ENCODE measurements at regions of chr2 and their contacts with region 1.

Region 1: GRCh38 chr2:187299122-187299906 is 148.7 kb downstream of the CALCRL start:
- DNase-seq: peak in 1 of 5 donors; percentile 40
- ATAC-seq: no peak
- H3K4me3 ChIP-seq: no peak overlapping the region
- H3K27ac ChIP-seq: peak overlapping the region in 3 of 12 donors; percentile 5 to 36 (median 24)
- H3K4me1 ChIP-seq: peaks cover 0 to 24% (median 5%) of the 10 kb centered on the region in 12 donors
- H3K27me3 ChIP-seq: no peaks in the 10 kb centered on the region
- CTCF ChIP-seq: peak; percentile 11 to 60 (median 38)
- POLR2A ChIP-seq: no peak

Region 2: DNA sequence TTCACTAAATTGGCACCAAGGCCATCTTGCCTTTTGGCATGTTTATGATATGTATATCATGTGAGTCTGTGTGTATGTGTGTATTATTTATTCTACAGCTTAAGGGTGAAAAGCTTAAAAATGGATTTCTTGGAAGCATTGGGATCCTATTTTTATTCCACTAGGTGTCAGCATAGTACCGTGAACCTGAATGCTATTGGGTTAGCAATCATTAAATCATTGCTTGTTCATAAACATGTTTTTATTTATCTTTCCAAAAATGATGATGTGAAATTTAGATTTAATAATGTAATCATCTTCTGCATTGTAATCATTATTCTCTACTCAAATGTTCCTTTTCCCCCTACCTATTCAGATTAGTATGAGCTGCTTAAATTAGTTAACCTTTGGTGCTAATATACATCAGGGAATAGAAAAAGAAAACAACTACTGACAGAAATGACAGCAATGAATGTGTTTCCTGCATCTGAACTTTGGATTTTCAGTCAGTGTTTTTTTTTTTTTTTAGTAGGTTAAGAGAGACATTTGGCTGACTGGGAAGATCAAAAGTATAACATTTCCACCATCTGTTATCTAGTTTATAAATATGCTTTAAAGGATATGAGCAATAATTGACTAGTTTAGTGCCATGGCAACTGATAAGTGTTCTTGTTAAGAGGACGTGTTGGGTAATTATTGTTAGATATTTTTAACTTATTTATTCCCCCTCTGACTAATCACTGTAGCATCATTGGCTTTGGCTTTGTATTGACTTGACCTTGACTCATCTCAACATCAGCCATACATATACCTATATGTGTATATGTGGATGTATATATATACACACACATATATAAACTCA is 436.2 kb before region 1 on chr2:
- intact Hi-C with region 1: loop called in 4 of 10 experiments (anchors 5 to 10 kb)
- DNase-seq: no peak
- ATAC-seq: peak in 2 of 4 donors; percentile 59 to 63
- H3K4me3 ChIP-seq: no peak overlapping the region
- H3K27ac ChIP-seq: no peak overlapping the region
- H3K4me1 ChIP-seq: peaks cover 0 to 7% (median 0%) of the 10 kb centered on the region in 12 donors
- H3K27me3 ChIP-seq: no peaks in the 10 kb centered on the region
- CTCF ChIP-seq: peak; percentile 58 to 86 (median 70)
- POLR2A ChIP-seq: no peak

Region 3: GRCh38 chr2:186868344-186868743 is 431.0 kb before region 1 on chr2:
- intact Hi-C with region 1: loop called in 4 of 10 experiments (anchors 5 to 10 kb)
- DNase-seq: no peak
- ATAC-seq: no peak
- H3K4me3 ChIP-seq: no peak overlapping the region
- H3K27ac ChIP-seq: peak overlapping the region in 1 of 12 donors; percentile 6
- H3K4me1 ChIP-seq: peaks cover 0 to 18% (median 0%) of the 10 kb centered on the region in 12 donors
- H3K27me3 ChIP-seq: no peaks in the 10 kb centered on the region
- CTCF ChIP-seq: no peak
- POLR2A ChIP-seq: no peak

Measured in heart left ventricle (tissue), 16 donors.